Activated CD4-positive, alpha-beta T cell treated with anti-CD3 and anti-CD28 coated beads for 36 hours (primary cell): ENCODE measurements at regions of chr1 and their contacts with region 1.

Region 1: DNA sequence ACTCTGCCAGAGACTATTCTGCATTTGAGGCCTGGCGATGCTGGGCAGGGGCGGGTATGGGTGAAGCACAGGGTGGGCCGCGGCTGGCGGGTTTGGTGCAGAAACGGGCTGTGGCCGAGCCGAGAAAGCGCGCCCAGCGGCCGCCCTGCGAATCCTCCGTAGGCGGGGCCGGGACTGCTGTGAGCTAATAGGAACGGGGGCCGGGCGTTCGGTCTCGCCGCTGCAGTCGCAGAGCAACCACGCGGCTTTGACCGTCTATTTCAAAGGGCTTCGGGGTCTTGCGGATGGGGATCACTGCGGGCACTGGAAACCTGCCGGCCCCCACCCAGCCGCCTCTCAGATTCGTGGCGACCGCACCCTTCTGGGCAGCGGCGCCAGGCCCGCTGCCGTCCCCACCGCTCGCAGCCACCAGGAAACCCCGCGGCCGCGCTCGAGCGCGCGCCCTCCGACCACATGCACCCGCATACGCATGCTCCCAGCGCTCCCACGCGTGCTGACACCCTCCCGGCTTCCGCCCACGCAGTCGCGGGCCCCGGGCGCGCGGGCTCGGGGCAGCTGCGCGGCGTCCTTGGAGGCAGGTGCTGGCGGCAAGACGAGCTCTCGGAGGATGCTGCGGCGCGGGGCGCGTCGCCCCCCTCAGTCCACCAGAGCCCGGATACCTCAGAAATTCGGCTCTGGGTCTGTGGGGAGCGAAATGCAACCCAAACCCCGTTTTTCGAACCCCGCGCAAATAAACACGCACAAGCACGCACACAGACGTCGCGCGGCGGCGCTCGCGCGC is 32.6 kb downstream of the DNTTIP2 start:
- DNase-seq: peak; percentile 87
- ATAC-seq: peak; percentile 26
- H3K4me3 Mint-ChIP-seq: peak overlapping the region; percentile 90
- H3K27ac Mint-ChIP-seq: peak overlapping the region; percentile 88
- H3K4me1 Mint-ChIP-seq: peaks cover 20% of the 10 kb centered on the region
- H3K27me3 Mint-ChIP-seq: no peaks in the 10 kb centered on the region

Region 2: GRCh38 chr1:92960395-92961130 is 885.8 kb before region 1 on chr1:
- CTCF ChIA-PET with region 1: no interaction called
- POLR2A ChIA-PET with region 1: no interaction called
- intact Hi-C with region 1: loop called in 1 of 2 experiments (anchors 2 kb)
- DNase-seq: peak; percentile 78
- ATAC-seq: peak; percentile 62
- H3K4me3 Mint-ChIP-seq: peak overlapping the region; percentile 94
- H3K27ac Mint-ChIP-seq: peak overlapping the region; percentile 95
- H3K4me1 Mint-ChIP-seq: peaks cover 36% of the 10 kb centered on the region
- H3K27me3 Mint-ChIP-seq: no peaks in the 10 kb centered on the region

Region 3: DNA sequence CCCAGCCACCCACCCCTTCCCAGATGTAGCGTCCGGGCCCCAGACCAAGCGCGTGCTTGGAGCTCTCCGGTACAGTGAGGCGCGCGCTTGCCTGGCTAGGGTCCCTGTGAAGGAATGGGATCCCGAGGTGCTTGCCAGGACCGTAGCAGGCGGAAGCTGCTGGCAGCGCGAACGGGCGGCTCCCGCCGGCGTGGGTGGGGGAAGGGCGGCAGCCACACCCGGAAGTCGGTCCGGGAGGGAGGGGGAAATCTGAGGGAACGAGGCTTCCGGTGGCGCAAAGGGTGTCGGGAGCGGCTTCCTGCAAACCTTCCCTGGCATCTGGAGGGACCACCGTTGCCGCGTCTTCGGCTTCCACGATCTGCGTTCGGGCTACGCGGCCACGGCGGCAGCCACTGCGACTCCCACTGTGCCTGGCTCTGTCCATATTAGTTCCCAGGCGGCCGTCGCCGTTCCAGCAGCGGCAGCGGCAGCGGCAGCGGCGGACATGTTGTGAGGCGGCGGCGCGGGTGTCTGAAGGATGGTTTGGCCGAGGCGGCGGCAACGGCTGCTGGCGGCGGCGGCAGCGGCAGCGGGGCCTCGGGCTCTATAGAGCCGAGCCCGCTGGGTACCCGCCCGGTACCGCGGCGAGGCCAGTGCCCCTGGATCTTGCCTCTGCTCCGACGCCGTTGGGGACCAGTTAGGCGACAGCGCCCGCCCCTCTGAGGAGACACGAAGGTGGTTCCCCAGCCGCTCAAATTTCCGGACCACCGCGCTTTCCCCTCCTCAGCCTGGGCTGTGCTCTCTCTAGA is 500.6 kb before region 1 on chr1 and contains the start of gene DR1:
- CTCF ChIA-PET with region 1: no interaction called
- POLR2A ChIA-PET with region 1: interaction called, 3 read pairs
- intact Hi-C with region 1: loop called (anchors 1 to 2 kb)
- DNase-seq: peak; percentile 96
- ATAC-seq: peak; percentile 78
- H3K4me3 Mint-ChIP-seq: peak within 1 kb of the TSS; percentile 97
- H3K27ac Mint-ChIP-seq: peak within 1 kb of the TSS; percentile 97
- H3K4me1 Mint-ChIP-seq: peaks cover 22% of the 10 kb centered on the region
- H3K27me3 Mint-ChIP-seq: no peaks in the 10 kb centered on the region
- total RNA-seq, gene DR1: 84.8 to 95.3 TPM

Region 4: DNA sequence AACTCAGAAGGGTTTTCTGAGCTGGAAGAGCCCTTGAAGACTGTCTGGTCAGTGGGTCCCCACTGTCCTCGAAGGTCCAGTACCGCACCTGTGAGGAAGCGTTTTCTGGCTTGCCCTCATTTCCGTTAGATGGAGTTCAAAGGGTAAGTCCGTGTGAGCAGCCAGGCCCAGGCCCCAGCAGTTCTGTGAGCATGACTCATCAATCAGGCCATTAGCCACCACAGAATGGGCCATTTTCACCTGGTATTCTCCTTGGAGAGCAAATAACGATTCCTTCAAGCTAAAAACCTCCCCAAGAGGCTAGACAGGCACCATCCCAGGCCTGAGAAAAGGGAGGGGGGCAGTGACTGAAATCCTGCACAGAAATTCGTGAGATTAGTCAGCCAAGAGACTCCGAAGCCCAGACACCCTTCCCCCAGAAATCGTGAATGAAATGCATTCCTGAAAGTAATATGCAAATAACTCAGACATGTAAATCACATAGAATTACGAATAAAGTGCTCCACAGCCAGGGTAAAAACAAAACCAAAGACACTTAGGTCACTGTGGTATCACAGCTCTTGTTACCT is 230.7 kb before region 1 on chr1:
- CTCF ChIA-PET with region 1: interaction called, 7 read pairs
- POLR2A ChIA-PET with region 1: no interaction called
- intact Hi-C with region 1: loop called (anchors 2 to 5 kb)
- DNase-seq: peak; percentile 80
- ATAC-seq: peak; percentile 86
- H3K4me3 Mint-ChIP-seq: peak overlapping the region; percentile 15
- H3K27ac Mint-ChIP-seq: peak overlapping the region; percentile 86
- H3K4me1 Mint-ChIP-seq: peaks cover 22% of the 10 kb centered on the region
- H3K27me3 Mint-ChIP-seq: peaks cover 6% of the 10 kb centered on the region

Region 5: GRCh38 chr1:93699055-93699788 is 147.2 kb before region 1 on chr1:
- CTCF ChIA-PET with region 1: no interaction called
- POLR2A ChIA-PET with region 1: no interaction called
- intact Hi-C with region 1: no loop called
- DNase-seq: no peak
- ATAC-seq: no peak
- H3K4me3 Mint-ChIP-seq: no peak overlapping the region
- H3K27ac Mint-ChIP-seq: no peak overlapping the region
- H3K4me1 Mint-ChIP-seq: peaks cover 4% of the 10 kb centered on the region
- H3K27me3 Mint-ChIP-seq: no peaks in the 10 kb centered on the region

Region 6: DNA sequence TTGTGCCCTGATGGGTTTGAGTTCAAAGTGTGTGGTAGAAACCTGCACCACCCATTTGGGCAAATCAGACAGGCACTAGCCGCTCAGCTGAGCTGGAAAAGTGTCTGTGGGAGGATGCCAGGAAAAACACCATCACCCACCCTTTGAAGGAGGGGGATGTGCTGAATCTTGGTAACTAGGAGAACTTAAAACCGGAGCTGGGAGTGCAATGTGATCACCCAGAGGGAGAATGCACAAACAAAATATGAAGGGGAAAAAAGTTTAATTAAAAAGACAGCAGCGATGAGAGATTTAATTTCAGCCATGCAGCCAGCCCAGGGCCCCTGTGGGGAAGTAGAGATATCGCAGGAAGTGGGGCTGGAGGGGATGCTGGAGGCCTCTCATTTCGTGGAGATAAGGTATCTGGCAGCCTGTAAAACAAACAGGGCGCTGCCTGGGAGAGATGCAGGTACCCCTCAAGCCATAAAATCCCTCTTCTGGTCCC is 78.0 kb before region 1 on chr1:
- CTCF ChIA-PET with region 1: no interaction called
- POLR2A ChIA-PET with region 1: no interaction called
- intact Hi-C with region 1: no loop called
- DNase-seq: no peak
- ATAC-seq: no peak
- H3K4me3 Mint-ChIP-seq: no peak overlapping the region
- H3K27ac Mint-ChIP-seq: no peak overlapping the region
- H3K4me1 Mint-ChIP-seq: peaks cover 19% of the 10 kb centered on the region
- H3K27me3 Mint-ChIP-seq: no peaks in the 10 kb centered on the region

Region 7: DNA sequence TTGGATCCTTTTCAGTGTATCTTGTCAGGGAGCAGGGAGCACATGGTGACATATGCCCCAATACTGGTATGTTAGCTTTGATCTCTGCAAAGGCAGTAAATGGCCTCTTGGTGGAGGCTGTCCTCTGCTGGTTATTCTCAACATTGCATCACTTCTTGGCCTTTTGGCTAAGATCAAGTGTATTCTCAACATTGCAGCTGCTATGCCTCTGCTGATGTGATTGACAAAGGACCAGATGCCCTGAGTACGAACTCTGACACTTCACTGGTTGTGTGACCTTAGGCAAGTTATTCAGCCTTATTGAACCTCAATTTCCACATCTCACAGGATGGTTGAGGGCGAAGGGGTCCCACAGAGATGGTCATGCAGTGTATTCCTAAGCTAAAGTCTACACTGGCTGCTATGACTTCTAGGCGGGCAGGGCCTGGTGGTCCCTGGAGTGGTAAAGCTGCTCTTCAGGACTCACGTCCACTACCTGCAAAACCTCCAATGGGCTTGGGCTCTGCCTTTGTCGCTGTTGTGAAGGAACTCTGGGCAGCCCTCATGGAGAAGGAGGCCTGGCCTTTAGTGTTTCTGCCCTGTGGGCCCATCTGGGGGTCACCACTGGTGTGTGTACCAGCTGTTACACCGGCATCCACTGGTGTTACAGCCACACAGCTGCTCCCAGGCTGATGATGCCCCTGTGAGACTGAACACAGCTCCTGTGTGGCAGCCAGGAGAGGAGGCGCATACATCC is 32.2 kb before region 1 on chr1:
- CTCF ChIA-PET with region 1: interaction called, 26 read pairs
- POLR2A ChIA-PET with region 1: no interaction called
- intact Hi-C with region 1: loop called (anchors 1 to 2 kb)
- DNase-seq: peak; percentile 67
- ATAC-seq: peak; percentile 45
- H3K4me3 Mint-ChIP-seq: no peak overlapping the region
- H3K27ac Mint-ChIP-seq: no peak overlapping the region
- H3K4me1 Mint-ChIP-seq: peaks cover 21% of the 10 kb centered on the region
- H3K27me3 Mint-ChIP-seq: no peaks in the 10 kb centered on the region

Region 8: GRCh38 chr1:93988634-93989350 is 142.4 kb after region 1 on chr1:
- CTCF ChIA-PET with region 1: no interaction called
- POLR2A ChIA-PET with region 1: no interaction called
- intact Hi-C with region 1: no loop called
- DNase-seq: no peak
- ATAC-seq: no peak
- H3K4me3 Mint-ChIP-seq: no peak overlapping the region
- H3K27ac Mint-ChIP-seq: no peak overlapping the region
- H3K4me1 Mint-ChIP-seq: no peaks in the 10 kb centered on the region
- H3K27me3 Mint-ChIP-seq: peaks cover 22% of the 10 kb centered on the region

Region 9: GRCh38 chr1:94039514-94039870 is 193.1 kb after region 1 on chr1:
- CTCF ChIA-PET with region 1: interaction called, 3 read pairs
- POLR2A ChIA-PET with region 1: no interaction called
- intact Hi-C with region 1: loop called in 1 of 2 experiments (anchors 1 kb)
- DNase-seq: peak; percentile 82
- ATAC-seq: no peak
- H3K4me3 Mint-ChIP-seq: no peak overlapping the region
- H3K27ac Mint-ChIP-seq: no peak overlapping the region
- H3K4me1 Mint-ChIP-seq: peaks cover 26% of the 10 kb centered on the region
- H3K27me3 Mint-ChIP-seq: peaks cover 30% of the 10 kb centered on the region